Activated CD4-positive, alpha-beta T cell treated with anti-CD3 and anti-CD28 coated beads, Interleukin-2, amount 10 ng/mL, durations not matched to agents 24 days and 14 days (primary cell): ENCODE measurements at regions of chr1 and their contacts with region 1.

Region 1: DNA sequence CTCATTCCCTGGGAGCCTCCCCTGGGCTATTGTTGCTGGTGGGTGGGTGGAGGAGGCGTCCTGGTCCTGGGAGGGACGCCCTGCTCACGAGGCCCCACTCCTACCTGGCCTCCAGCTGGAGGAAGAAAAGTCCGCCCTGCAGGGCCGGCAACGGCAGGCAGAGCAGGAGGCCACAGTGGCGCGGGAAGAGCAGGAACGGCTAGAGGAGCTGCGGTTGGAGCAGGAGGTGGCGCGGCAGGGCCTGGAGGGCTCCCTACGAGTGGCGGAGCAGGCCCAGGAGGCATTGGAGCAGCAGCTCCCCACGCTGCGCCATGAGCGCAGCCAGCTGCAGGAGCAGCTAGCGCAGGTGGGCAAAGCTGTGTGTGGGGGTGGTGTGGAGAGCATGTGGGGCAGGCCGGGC is 24.9 kb downstream of the CROCC start:
- DNase-seq: no peak
- H3K4me3 Mint-ChIP-seq: no peak overlapping the region
- H3K27ac Mint-ChIP-seq: no peak overlapping the region
- H3K4me1 Mint-ChIP-seq: no peaks in the 10 kb centered on the region
- H3K27me3 Mint-ChIP-seq: no peaks in the 10 kb centered on the region

Region 2: DNA sequence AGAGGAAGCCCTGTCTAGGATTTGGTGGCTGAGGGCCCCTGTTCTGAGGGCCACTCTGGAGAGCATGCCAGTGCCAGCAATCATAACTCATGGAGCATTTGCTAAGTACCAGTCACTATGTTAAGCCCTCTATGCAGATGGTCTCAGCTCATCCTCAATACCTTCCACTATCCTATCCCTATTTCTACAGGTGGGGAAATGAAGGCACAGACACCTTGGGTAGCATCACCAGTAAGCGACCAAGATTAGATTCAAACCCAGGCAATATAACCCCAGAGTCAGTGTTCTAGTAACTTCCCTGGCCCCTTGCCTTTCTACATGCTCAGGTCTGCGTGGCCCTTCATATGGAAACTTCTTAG is 325.4 kb before region 1 on chr1:
- intact Hi-C with region 1: loop called (anchors 1 kb)
- DNase-seq: no peak
- H3K4me3 Mint-ChIP-seq: no peak overlapping the region
- H3K27ac Mint-ChIP-seq: no peak overlapping the region
- H3K4me1 Mint-ChIP-seq: no peaks in the 10 kb centered on the region
- H3K27me3 Mint-ChIP-seq: no peaks in the 10 kb centered on the region